ENCODE measurements at regions of chr2 and their contacts with region 1.

Region 1: GRCh38 chr2:62447411-62447810 is 58.6 kb downstream of the TMEM17 start:
- DNase-seq: no peak
- H3K4me3 ChIP-seq: no peak overlapping the region
- H3K27ac ChIP-seq: no peak overlapping the region
- H3K4me1 ChIP-seq: no peaks in the 10 kb centered on the region
- H3K27me3 ChIP-seq: no peaks in the 10 kb centered on the region
- CTCF ChIP-seq: no peak

Region 2: GRCh38 chr2:62362561-62362960 is 84.8 kb before region 1 on chr2:
- CTCF ChIA-PET with region 1: no interaction called
- dilution Hi-C with region 1: loop called (anchors 5 kb)
- in situ Hi-C with region 1: no loop called
- intact Hi-C with region 1: no loop called
- DNase-seq: peak; percentile 66
- H3K4me3 ChIP-seq: no peak overlapping the region
- H3K27ac ChIP-seq: no peak overlapping the region
- H3K4me1 ChIP-seq: no peaks in the 10 kb centered on the region
- H3K27me3 ChIP-seq: no peaks in the 10 kb centered on the region
- CTCF ChIP-seq: no peak